K562 (cell line): ENCODE measurements at regions of chrX and their contacts with region 1.

Region 1: GRCh38 chrX:149962859-149963757 is 24.8 kb upstream of the EOLA2 start:
- DNase-seq: peak in 2 of 4 experiments; percentile 14 to 22
- ATAC-seq: peak; percentile 81
- H3K4me3 ChIP-seq: no peak overlapping the region
- H3K27ac ChIP-seq: no peak overlapping the region
- H3K4me1 ChIP-seq: peaks cover 0 to 3% of the 10 kb centered on the region in 2 experiments; a peak in 2 of 5 replicates
- H3K27me3 ChIP-seq: no peaks in the 10 kb centered on the region
- CTCF ChIP-seq: peak; percentile 33 to 43 (median 37); a peak in 5 of 6 replicates
- EP300 ChIP-seq: no peak
- POLR2A ChIP-seq: no peak
- RAD21 ChIP-seq: peak in 1 of 2 experiments; percentile 55; a peak in 2 of 4 replicates

Region 2: DNA sequence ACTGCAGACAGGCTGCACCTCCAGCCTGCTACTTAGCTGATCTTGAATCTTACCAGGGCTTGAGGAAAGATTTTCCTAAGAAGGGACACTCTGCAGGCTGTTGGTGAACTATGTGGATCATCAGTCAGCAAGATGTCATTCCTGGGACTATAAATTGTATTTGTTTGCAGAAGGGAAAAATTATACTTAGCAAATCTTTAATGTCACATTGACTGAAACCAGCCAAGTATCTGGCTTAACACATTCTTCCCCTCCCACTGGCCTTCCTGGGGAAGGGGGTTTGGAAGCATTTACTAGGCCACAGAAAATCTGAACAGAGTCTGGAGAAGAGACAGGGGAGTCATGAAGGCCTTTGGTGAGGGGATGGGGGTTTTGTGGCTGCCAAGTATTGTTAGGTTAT is 131.9 kb after region 1 on chrX:
- CTCF ChIA-PET with region 1: no interaction called
- POLR2A ChIA-PET with region 1: no interaction called
- in situ Hi-C with region 1: no loop called
- intact Hi-C with region 1: no loop called
- DNase-seq: no peak
- ATAC-seq: no peak
- H3K4me3 ChIP-seq: no peak overlapping the region
- H3K27ac ChIP-seq: no peak overlapping the region
- H3K4me1 ChIP-seq: no peaks in the 10 kb centered on the region
- H3K27me3 ChIP-seq: no peaks in the 10 kb centered on the region
- CTCF ChIP-seq: no peak
- EP300 ChIP-seq: no peak
- POLR2A ChIP-seq: no peak
- RAD21 ChIP-seq: no peak

Region 3: DNA sequence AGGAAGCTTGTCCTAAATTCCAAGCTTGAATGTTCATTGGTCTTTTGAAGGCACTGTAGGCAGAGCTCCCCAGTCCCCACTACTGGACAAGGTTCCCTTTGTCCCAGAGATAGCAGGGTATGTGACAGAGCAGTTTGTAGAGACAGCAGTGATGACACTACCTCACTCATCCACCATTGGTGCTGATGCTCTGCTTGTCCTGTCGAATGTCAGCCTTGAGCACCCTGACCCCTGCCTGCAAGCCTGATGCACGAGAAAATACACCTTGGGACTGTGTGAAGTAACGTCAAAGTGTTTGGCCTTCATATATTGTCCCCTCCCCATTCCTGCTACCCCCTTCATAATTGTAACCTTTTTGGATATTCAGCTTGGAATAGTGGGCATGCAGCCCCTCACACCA is 164.1 kb after region 1 on chrX:
- CTCF ChIA-PET with region 1: no interaction called
- POLR2A ChIA-PET with region 1: no interaction called
- in situ Hi-C with region 1: no loop called
- intact Hi-C with region 1: no loop called
- DNase-seq: no peak
- ATAC-seq: peak; percentile 51
- H3K4me3 ChIP-seq: no peak overlapping the region
- H3K27ac ChIP-seq: no peak overlapping the region
- H3K4me1 ChIP-seq: no peaks in the 10 kb centered on the region
- H3K27me3 ChIP-seq: no peaks in the 10 kb centered on the region
- CTCF ChIP-seq: peak in 1 of 3 experiments; percentile 54; a peak in 3 of 6 replicates
- EP300 ChIP-seq: no peak
- POLR2A ChIP-seq: no peak
- RAD21 ChIP-seq: no peak

Region 4: GRCh38 chrX:150411656-150412055 is 448.5 kb after region 1 on chrX:
- CTCF ChIA-PET with region 1: no interaction called
- POLR2A ChIA-PET with region 1: no interaction called
- in situ Hi-C with region 1: no loop called
- intact Hi-C with region 1: no loop called
- DNase-seq: no peak
- ATAC-seq: no peak
- H3K4me3 ChIP-seq: no peak overlapping the region
- H3K27ac ChIP-seq: no peak overlapping the region
- H3K4me1 ChIP-seq: no peaks in the 10 kb centered on the region
- H3K27me3 ChIP-seq: no peaks in the 10 kb centered on the region; a peak in 1 of 5 replicates
- CTCF ChIP-seq: no peak
- EP300 ChIP-seq: no peak
- POLR2A ChIP-seq: no peak
- RAD21 ChIP-seq: no peak

Region 5: DNA sequence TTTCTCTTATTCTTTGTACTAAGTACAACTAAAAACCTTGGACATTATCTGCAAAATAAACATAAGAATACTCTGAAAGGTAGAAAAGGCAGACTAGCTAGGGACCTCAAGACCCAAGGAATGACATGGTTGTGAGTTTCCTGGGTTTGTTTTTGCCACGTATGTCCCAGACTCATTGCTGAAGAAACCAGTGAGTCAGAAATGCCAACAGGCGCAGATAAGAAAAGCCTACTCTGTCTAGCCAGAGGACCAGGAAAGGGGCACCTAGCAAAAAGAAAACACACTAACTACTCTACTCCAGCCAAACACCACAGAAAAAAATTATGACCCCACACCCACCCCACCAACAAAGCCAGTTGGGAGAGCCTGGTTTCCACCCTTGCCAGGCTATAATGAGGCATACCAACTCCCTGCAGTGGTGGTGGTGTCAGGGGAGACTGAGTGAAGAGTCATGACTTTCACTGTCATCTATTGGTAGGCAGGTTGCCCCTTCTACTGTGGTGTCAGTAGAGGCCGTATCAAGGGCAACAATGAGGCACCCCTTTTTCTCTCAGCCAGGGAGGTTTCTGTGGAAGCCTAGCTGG is 741.0 kb after region 1 on chrX:
- CTCF ChIA-PET with region 1: no interaction called
- POLR2A ChIA-PET with region 1: no interaction called
- in situ Hi-C with region 1: loop called (anchors 25 kb)
- intact Hi-C with region 1: no loop called
- DNase-seq: no peak
- ATAC-seq: no peak
- H3K4me3 ChIP-seq: no peak overlapping the region
- H3K27ac ChIP-seq: no peak overlapping the region
- H3K4me1 ChIP-seq: no peaks in the 10 kb centered on the region
- H3K27me3 ChIP-seq: no peaks in the 10 kb centered on the region
- CTCF ChIP-seq: no peak
- EP300 ChIP-seq: no peak
- POLR2A ChIP-seq: no peak
- RAD21 ChIP-seq: no peak